Left colon (tissue), 2 donors: ENCODE measurements at regions of chr11 and their contacts with region 1.

Region 1: DNA sequence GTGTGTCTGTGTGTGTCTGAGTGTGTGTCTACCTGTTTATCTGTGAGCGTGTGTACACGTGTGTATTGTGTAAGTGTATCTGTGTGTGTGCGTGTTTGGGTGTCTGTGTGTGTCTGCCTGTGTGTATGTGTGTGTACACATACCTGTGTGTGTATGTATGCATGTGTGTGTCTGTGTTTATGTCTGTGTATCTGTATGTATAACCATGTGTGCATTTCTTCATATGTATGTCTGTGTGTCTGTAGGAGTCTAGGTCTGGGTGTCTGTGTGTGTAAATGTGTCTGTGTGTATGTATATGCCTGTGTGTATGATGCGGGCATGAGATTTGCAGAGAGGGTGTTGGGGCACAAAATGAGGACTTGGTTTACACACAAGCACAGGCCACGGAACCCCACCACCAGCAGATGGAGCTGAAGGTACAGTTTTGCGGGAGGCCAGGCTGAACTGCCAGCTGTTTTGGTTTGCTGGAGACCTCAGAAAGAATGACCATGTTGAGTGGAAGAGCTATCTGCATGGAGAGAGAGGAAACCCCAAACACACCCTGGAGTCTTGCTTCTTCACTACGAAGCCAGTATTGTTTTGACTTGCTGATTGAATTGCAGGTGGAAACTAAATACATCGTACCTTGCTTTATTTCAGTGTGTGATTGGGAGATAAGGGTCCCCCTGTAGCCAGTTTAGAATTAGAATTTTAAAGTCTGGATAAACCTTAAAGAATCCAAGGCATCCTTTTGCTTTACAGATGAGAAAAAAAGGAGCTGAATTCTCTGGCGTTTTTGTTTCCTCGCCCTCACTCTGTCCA is 497.2 kb downstream of the NTM start:
- DNase-seq: peak; percentile 38 to 54
- ATAC-seq: no peak

Region 2: DNA sequence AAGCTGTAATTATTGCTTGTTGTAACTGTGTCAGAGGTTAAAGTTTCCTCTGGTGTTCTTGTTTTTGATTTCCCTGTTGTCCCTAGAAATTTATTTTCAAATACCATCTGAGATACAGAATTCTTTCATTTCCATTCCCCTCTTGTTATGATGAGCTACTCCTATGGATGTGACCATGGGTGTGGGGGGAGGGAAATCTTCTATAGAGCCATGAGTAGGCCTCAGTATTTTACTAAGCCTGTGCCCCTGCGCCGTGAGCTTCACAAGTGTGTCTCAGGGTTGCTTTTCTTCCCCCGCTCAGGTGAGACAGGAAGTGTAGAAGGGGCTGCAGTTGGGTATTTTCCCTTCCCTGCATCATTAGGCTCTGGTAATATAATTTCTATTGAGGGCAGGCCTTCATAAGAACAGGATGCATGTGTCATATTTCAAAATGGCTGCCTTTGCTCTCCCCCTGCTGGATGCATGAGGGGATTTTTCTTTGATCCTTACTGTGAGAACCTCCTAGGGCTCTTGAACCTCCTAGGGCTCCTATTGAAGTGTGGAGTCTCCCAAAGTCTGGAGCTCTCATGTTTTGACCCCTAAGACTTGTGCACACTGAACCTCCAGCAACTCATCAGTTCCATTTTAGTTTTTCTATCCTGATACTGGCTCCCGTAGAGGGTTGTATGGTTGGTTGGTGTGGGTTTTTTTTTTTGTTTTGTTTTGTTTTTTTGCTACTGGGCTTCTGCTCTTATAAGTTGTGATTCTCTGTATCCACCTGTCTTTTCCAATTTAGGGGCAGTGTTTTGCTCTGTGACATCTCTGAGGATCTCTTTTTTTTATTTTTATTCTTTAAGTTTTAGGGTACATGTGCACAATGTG is 161.0 kb after region 1 on chr11:
- intact Hi-C with region 1: loop called in 1 of 2 experiments (anchors 5 kb)
- DNase-seq: peak in 1 of 2 donors; percentile 50
- ATAC-seq: peak; percentile 62

Region 3: GRCh38 chr11:132126973-132127899 is 259.6 kb after region 1 on chr11:
- intact Hi-C with region 1: loop called in 1 of 2 experiments (anchors 5 kb)
- DNase-seq: peak in 1 of 2 donors; percentile 16
- ATAC-seq: no peak